ENCODE measurements at regions of chr1 and their contacts with region 1.

Region 1: GRCh38 chr1:156677616-156678596 is 699 bp upstream of the NES start:
- DNase-seq: peak; percentile 87
- H3K4me3 Mint-ChIP-seq: no peak overlapping the region
- H3K27ac Mint-ChIP-seq: no peak overlapping the region
- H3K4me1 Mint-ChIP-seq: peaks cover 6% of the 10 kb centered on the region
- H3K27me3 Mint-ChIP-seq: peaks cover 46% of the 10 kb centered on the region
- CTCF ChIP-seq: peak; percentile 91

Region 2: DNA sequence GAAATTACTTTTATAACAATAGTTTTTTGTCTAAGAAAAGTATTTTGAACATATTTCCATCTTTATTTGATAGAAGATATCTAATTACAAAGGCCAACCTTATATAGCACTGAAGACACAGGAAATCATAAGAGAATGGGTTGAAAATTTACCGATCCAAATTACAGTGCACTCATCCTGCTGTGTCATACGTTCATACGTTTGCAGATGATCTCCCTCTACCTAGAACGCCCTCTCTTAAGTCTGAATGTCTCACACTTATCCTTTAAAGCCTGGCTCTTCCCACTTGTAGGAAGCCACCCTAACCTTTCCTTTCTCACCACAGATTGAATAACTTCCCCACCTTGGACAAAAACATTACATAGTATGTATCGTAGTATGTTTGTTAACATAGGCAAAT is 1124.6 kb before region 1 on chr1:
- CTCF ChIA-PET with region 1: no interaction called
- POLR2A ChIA-PET with region 1: no interaction called
- intact Hi-C with region 1: no loop called
- DNase-seq: no peak
- H3K4me3 Mint-ChIP-seq: no peak overlapping the region
- H3K27ac Mint-ChIP-seq: no peak overlapping the region
- H3K4me1 Mint-ChIP-seq: peaks cover 6% of the 10 kb centered on the region
- H3K27me3 Mint-ChIP-seq: no peaks in the 10 kb centered on the region
- CTCF ChIP-seq: no peak

Region 3: DNA sequence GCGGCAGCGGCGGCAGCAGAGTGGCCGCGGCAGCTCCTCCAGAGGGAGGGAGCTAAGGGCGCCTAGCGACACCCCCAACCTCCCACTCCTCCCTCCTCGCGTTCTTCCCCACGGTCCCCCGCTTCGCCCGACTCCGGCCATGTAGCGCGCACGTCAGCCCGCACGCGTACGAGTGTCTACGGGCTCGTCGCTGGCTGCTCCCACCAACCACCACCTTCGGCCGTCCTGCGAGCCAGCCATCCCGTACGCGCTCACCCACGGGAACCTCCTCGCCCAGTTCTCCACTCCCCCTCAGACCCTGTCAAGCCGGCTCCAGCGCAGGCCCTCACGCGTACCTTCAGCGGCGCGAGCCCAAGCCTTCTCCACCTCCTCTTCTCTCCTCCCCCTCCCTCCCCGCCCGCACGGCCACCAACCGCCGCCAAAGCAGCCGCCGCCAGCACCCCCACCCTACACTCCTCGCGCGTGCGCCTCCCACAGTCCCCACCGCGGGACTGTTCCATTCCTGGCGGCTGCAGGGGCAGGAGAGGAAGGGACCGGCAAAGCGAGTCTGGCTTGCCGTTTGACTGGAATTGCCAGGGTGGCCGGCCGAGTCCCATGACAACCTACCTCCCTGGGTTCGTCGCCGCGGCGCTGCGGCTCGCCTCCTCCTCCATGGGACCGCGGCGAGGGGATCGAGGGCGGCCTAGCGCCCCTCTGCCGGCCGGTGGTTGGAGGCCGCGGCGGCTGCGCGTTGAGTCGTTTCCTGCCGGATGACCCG is 989.4 kb before region 1 on chr1 and contains the start of gene YY1AP1:
- CTCF ChIA-PET with region 1: no interaction called
- POLR2A ChIA-PET with region 1: no interaction called
- intact Hi-C with region 1: no loop called
- DNase-seq: peak; percentile 95
- H3K4me3 Mint-ChIP-seq: peak within 1 kb of the TSS; percentile 98
- H3K27ac Mint-ChIP-seq: peak within 1 kb of the TSS; percentile 98
- H3K4me1 Mint-ChIP-seq: peaks cover 47% of the 10 kb centered on the region
- H3K27me3 Mint-ChIP-seq: no peaks in the 10 kb centered on the region
- CTCF ChIP-seq: no peak
- total RNA-seq, gene YY1AP1: 78.6 and 88.5 TPM in 2 replicates

Region 4: GRCh38 chr1:156773607-156774006 is 95.7 kb after region 1 on chr1:
- CTCF ChIA-PET with region 1: interaction called, 10 read pairs
- POLR2A ChIA-PET with region 1: no interaction called
- intact Hi-C with region 1: no loop called
- DNase-seq: no peak
- H3K4me3 Mint-ChIP-seq: no peak overlapping the region
- H3K27ac Mint-ChIP-seq: no peak overlapping the region
- H3K4me1 Mint-ChIP-seq: peaks cover 65% of the 10 kb centered on the region
- H3K27me3 Mint-ChIP-seq: no peaks in the 10 kb centered on the region
- CTCF ChIP-seq: no peak

Region 5: DNA sequence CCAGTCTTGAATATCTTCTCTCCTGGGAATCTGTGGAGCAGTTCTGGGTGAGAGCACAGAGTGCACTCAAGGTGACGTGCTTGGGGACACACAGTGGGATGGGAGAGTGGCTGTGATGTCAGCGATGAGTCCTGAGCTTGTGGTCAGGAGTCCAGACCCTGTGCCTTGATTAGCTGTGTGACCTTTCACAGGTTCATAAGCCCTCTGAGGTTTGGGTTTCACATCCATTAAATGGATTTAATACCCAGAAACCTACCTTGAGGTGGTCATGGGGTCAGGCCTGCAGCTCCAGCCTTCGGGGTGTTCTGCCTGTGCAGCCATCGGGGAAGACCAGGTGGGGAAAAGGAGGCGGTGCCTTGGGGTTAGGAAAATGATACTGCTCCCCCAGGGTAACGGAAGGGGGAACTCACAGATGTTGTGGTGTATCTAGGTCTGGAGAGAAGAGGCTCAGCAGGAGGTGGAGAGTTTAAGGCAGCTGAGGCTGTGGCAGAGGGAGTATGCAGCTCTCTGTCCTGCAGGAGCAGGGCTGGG is 498.8 kb after region 1 on chr1:
- CTCF ChIA-PET with region 1: no interaction called
- POLR2A ChIA-PET with region 1: no interaction called
- intact Hi-C with region 1: no loop called
- DNase-seq: no peak
- H3K4me3 Mint-ChIP-seq: no peak overlapping the region
- H3K27ac Mint-ChIP-seq: no peak overlapping the region
- H3K4me1 Mint-ChIP-seq: no peaks in the 10 kb centered on the region
- H3K27me3 Mint-ChIP-seq: peaks cover 89% of the 10 kb centered on the region
- CTCF ChIP-seq: no peak